ENCODE measurements at regions of chr11 and their contacts with region 1.

Region 1: GRCh38 chr11:73335204-73335923 is 27.3 kb downstream of the ARHGEF17 start:
- DNase-seq: peak; percentile 85
- H3K4me3 ChIP-seq: peak overlapping the region; percentile 20
- H3K27ac ChIP-seq: peak overlapping the region; percentile 83
- H3K4me1 ChIP-seq: peaks cover 80% of the 10 kb centered on the region
- H3K27me3 ChIP-seq: no peaks in the 10 kb centered on the region
- CTCF ChIP-seq: peak; percentile 99

Region 2: DNA sequence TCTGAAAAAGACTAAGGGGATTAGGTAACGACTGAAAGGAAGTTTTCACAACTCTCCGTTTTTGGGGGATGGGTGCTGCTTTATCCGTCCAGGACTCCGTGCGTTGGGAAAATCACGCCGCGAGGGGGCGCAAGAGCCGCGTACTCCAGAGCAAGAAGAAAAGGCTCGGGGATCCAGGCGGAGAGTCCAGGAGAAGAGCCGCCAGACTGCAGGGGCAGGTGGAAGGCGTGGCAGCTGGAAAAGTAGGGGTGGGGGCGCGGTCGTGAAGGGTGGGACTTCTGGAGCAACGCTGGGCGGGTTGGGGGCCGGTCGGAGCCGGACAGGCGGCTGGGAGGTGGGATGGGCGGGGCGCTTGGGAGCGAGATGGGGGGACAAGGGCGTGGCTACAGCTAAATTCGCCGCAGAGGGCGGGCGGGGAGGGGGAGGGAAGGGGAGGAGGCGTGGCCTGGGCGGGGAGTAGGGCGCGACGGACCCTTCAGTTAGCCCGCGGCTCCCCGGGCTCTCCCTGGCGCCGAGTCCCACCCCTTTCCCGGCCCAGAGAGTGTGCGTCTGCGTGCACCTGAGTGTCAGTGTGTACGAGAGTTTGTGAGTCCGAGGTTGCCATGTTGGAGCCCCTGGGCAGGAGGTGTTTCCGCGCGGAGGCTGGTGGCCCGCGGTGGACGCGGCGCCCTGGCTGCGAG is 27.9 kb before region 1 on chr11:
- intact Hi-C with region 1: loop called (anchors 2 kb)
- DNase-seq: peak; percentile 98
- H3K4me3 ChIP-seq: peak overlapping the region; percentile 88
- H3K27ac ChIP-seq: peak overlapping the region; percentile 99
- H3K4me1 ChIP-seq: peaks cover 55% of the 10 kb centered on the region
- H3K27me3 ChIP-seq: no peaks in the 10 kb centered on the region
- CTCF ChIP-seq: peak; percentile 84

Region 3: GRCh38 chr11:73350908-73351636 is 15.7 kb after region 1 on chr11:
- intact Hi-C with region 1: no loop called
- DNase-seq: peak; percentile 46
- H3K4me3 ChIP-seq: no peak overlapping the region
- H3K27ac ChIP-seq: no peak overlapping the region
- H3K4me1 ChIP-seq: peaks cover 25% of the 10 kb centered on the region
- H3K27me3 ChIP-seq: no peaks in the 10 kb centered on the region
- CTCF ChIP-seq: peak; percentile 99

Region 4: DNA sequence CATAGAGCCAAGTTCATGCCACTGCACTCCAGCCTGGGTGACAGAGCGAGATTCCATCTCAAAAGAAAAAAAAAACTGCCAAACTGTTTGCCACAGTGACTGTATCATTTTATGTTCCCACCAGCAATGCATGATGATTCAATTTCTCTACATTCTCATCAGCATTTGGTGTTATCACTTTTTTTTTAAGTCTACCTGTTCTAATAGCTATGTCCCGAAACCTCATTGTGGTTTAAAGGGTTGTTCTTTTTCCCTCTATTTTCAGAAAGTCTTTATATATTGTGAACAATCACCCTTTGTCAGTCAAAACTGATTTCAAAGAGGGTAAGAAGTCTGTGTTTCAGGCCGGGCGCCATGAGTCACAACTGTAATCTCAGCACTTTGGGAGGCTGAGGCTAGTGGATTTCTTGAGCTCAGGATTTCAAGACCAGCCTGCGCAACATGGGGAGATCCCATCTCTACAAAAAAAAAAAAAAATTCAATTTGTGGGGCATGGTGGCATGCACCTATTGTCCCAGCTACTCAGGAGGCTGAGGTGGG is 277.3 kb after region 1 on chr11:
- intact Hi-C with region 1: no loop called
- DNase-seq: no peak
- H3K4me3 ChIP-seq: no peak overlapping the region
- H3K27ac ChIP-seq: no peak overlapping the region
- H3K4me1 ChIP-seq: no peaks in the 10 kb centered on the region
- H3K27me3 ChIP-seq: no peaks in the 10 kb centered on the region
- CTCF ChIP-seq: no peak

Region 5: GRCh38 chr11:73640592-73640991 is 305.2 kb after region 1 on chr11:
- intact Hi-C with region 1: no loop called
- DNase-seq: no peak
- H3K4me3 ChIP-seq: no peak overlapping the region
- H3K27ac ChIP-seq: no peak overlapping the region
- H3K4me1 ChIP-seq: peaks cover 3% of the 10 kb centered on the region
- H3K27me3 ChIP-seq: peaks cover 21% of the 10 kb centered on the region
- CTCF ChIP-seq: no peak